ENCODE measurements at regions of chr12 and their contacts with region 1.

Region 1: DNA sequence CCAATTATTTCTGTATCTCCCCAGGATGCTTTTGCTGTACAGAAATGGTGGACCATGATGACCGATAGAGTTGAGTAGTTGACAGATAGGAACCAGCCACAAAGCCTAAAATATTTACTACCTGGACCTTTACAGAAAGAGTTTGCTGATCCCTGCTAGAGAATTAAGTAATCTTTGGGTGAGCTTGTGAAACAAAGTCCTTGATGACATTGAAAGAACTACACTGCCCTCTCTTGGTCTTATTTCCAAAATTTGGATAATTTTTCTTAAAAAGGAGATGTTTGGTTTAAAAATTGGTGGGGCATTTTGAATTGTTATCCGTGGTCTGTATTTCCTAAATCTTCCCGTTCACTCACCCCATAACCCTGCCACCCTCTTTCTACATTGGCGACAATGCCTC is 13.7 kb upstream of the TCTN1 start:
- DNase-seq: no peak
- H3K4me3 ChIP-seq: no peak overlapping the region
- H3K27ac ChIP-seq: no peak overlapping the region
- H3K4me1 ChIP-seq: peaks cover 5 to 17% (median 7%) of the 10 kb centered on the region in 4 donors
- H3K27me3 ChIP-seq: no peaks in the 10 kb centered on the region
- CTCF ChIP-seq: peak; percentile 48 to 70 (median 53)
- EP300 ChIP-seq: no peak
- POLR2A ChIP-seq: no peak

Region 2: DNA sequence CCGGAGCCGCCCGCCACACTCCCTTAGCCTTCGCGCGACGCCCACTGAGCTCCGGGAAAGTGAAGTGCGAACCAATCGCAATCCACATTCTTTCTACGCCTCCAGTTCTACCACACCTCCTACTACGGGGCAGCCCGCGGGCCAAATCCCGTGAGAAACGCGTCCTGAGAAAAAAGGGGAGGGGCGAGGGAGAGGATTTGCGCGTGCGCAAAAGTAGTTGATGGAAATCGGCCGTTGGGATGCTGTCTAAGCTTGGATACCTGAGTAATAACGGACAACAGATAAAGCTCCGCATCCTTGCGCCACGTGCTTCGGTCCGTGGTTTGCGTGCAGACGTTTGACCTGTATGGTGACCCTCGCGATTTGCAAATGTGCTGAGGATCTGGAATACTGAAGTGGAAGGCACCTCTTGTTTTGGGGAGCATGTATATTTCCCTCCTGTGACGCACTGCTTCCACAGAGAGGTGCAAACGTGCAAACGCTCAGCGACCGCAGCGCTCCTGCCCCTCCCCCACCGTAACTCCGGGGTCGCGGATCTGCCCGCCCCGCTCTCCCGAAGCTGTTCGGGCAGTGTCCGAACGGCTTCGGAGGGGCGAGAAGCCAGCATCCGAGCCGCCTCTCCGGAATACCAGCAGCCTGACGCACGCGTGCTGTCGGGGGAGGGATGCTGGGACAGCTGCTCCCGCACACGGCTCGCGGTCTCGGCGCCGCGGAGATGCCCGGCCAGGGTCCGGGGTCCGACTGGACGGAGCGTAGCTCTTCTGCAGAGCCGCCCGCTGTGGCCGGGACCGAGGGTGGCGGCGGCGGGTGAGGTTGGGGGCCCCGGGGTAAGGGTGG is 131.8 kb before region 1 on chr12 and contains the starts of genes FAM216A and GPN3:
- intact Hi-C with region 1: loop called (anchors 5 kb)
- DNase-seq: peak; percentile 99
- H3K4me3 ChIP-seq: peak within 1 kb of the TSS; percentile 77 to 91 (median 82)
- H3K27ac ChIP-seq: peak within 1 kb of the TSS; percentile 94 to 100 (median 96)
- H3K4me1 ChIP-seq: peaks cover 16 to 36% (median 28%) of the 10 kb centered on the region in 4 donors
- H3K27me3 ChIP-seq: no peaks in the 10 kb centered on the region
- CTCF ChIP-seq: peak in 1 of 3 experiments; percentile 42
- EP300 ChIP-seq: no peak
- POLR2A ChIP-seq: peak; percentile 56
- total RNA-seq, gene FAM216A: 6.2 to 10.4 (median 8.0) TPM
- total RNA-seq, gene GPN3: 18.5 to 39.0 (median 25.9) TPM

Region 3: DNA sequence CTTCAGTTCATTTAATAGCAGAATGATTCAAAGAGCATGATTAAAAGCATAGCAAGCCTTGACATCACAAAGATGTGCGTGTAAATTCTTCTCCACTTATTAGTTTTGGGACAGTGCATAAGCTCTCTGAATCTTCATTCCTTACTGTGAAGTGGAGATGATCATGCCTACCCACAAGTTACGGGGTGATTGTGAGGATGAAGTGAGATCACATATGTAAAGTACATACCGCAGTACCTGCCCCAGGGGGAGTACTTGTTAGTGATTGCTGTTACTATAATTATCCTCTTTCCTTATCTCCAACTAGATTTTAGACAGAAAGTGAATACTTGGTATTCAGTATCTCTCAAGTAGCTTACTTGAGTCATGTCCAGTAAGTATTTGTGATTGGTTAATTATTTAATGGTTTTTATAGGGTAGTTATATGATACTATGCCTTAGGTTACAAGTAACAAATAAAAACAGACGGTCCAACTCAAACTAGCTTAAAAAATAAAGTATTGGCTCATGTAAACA is 92.1 kb before region 1 on chr12:
- intact Hi-C with region 1: loop called (anchors 1 kb)
- DNase-seq: no peak
- H3K4me3 ChIP-seq: no peak overlapping the region
- H3K27ac ChIP-seq: no peak overlapping the region
- H3K4me1 ChIP-seq: peaks cover 0 to 10% (median 6%) of the 10 kb centered on the region in 4 donors
- H3K27me3 ChIP-seq: no peaks in the 10 kb centered on the region
- CTCF ChIP-seq: no peak
- EP300 ChIP-seq: no peak
- POLR2A ChIP-seq: no peak

Region 4: GRCh38 chr12:110698171-110698902 is 98.1 kb after region 1 on chr12:
- intact Hi-C with region 1: loop called (anchors 5 kb)
- DNase-seq: no peak
- H3K4me3 ChIP-seq: peak overlapping the region; percentile 10 to 47 (median 26)
- H3K27ac ChIP-seq: peak overlapping the region in 2 of 4 donors; percentile 38 to 39
- H3K4me1 ChIP-seq: peaks cover 16 to 23% (median 18%) of the 10 kb centered on the region in 4 donors
- H3K27me3 ChIP-seq: no peaks in the 10 kb centered on the region
- CTCF ChIP-seq: peak; percentile 55 to 74 (median 70)
- EP300 ChIP-seq: no peak
- POLR2A ChIP-seq: no peak

Measured in esophagus muscularis mucosa (tissue), 4 donors.